ENCODE measurements at regions of chr9 and their contacts with region 1.

Region 1: GRCh38 chr9:34620061-34620994 is at the start of gene DCTN3:
- DNase-seq: peak; percentile 71 to 96 (median 91)
- ATAC-seq: peak; percentile 98 to 99 (median 99)
- H3K4me3 ChIP-seq: peak within 1 kb of the TSS; percentile 77 to 88
- H3K4me3 Mint-ChIP-seq: peak within 1 kb of the TSS; percentile 93 to 97 (median 95)
- H3K27ac ChIP-seq: peak within 1 kb of the TSS; percentile 38
- H3K27ac Mint-ChIP-seq: peak within 1 kb of the TSS; percentile 38 to 86
- H3K4me1 ChIP-seq: peaks cover 6 to 33% of the 10 kb centered on the region in 2 experiments
- H3K4me1 Mint-ChIP-seq: peaks cover 31 to 32% (median 32%) of the 10 kb centered on the region in 3 donors
- H3K27me3 ChIP-seq: peaks cover 2 to 42% of the 10 kb centered on the region in 2 experiments
- H3K27me3 Mint-ChIP-seq: peaks cover 20 to 33% of the 10 kb centered on the region in 2 donors
- total RNA-seq, gene DCTN3: 60.8 to 82.9 (median 69.0) TPM

Region 2: GRCh38 chr9:34654323-34655051 is 34.2 kb after region 1 on chr9:
- CTCF ChIA-PET with region 1: no interaction called
- POLR2A ChIA-PET with region 1: interaction called in 1 of 2 experiments, 10 read pairs
- DNase-seq: no peak
- ATAC-seq: no peak
- H3K4me3 ChIP-seq: no peak overlapping the region
- H3K4me3 Mint-ChIP-seq: no peak overlapping the region
- H3K27ac ChIP-seq: no peak overlapping the region
- H3K27ac Mint-ChIP-seq: peak overlapping the region in 1 of 2 donors; percentile 3
- H3K4me1 ChIP-seq: peaks cover 3 to 20% of the 10 kb centered on the region in 2 experiments
- H3K4me1 Mint-ChIP-seq: peaks cover 15 to 39% (median 34%) of the 10 kb centered on the region in 3 donors
- H3K27me3 ChIP-seq: no peaks in the 10 kb centered on the region
- H3K27me3 Mint-ChIP-seq: no peaks in the 10 kb centered on the region